ENCODE measurements at regions of chr2 and their contacts with region 1.

Region 1: DNA sequence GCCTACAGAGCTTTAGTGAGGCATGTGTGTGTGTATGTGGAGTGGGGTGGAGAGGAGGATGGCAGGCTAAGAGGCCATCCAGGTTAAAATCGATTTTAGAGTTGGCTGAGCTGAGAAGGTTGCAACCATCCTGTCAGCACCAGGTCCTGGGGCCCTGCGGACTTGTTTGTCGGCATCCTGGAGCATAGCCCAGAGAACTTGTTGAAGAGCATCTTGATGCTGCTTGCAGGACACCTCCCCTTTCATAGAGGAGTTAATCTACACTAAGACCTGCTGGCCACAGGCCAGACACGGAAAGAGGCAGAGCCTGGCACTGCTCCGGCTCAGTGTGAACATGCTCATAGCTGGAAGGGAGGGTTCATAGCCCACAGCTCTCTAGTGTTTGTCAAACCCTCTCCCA is 72.1 kb upstream of the RGPD5 start:
- DNase-seq: peak; percentile 59
- H3K4me3 ChIP-seq: no peak overlapping the region
- H3K27ac ChIP-seq: peak overlapping the region; percentile 76 to 77
- H3K4me1 ChIP-seq: peaks cover 12% of the 10 kb centered on the region
- H3K27me3 ChIP-seq: no peaks in the 10 kb centered on the region
- CTCF ChIP-seq: no peak
- POLR2A ChIP-seq: no peak

Region 2: DNA sequence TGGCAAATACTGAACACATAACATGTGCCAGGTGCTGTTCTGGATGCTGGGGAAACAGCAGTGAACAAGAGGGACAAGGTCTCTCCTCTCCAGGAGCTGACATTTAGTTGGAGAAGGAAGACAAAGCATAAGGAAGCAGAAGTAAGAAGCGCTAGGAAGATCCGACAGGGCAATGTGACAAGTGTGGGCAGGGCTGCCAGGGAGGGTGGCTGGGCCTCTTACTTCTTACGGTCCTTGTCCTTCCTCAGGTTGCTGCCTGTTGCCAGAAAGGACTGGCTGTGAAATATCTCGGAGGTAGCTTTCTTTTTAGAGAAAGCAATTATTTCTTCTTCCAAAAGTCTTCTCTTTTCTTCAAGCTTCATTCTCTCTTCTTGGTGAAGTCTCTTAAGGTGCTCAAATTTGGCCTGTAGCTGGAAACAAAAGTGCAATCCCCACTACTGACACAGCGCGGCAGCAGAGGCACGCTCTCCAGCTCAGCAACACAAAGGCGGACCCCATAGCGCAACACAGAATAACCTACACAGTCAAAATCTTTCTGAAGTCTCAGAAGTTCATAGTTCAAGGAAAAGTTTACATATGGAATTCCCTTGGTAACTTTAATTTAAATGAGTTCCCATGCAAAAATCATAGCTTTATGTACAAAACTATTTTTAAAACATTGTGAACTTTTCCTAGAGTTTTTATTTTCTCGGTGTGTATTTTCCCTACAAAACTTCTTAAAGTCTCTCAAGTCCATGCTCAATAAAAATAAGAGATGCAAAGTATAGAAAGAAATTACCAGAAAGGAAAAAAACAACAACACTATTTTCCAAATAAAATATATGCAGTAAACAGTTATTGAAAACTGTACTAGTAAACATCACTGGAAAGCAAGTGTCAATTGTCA is 176.0 kb before region 1 on chr2:
- intact Hi-C with region 1: loop called (anchors 5 kb)
- DNase-seq: peak; percentile 52
- H3K4me3 ChIP-seq: no peak overlapping the region
- H3K27ac ChIP-seq: no peak overlapping the region
- H3K4me1 ChIP-seq: no peaks in the 10 kb centered on the region
- H3K27me3 ChIP-seq: no peaks in the 10 kb centered on the region
- CTCF ChIP-seq: peak; percentile 72 to 92 (median 84)
- POLR2A ChIP-seq: no peak

Region 3: DNA sequence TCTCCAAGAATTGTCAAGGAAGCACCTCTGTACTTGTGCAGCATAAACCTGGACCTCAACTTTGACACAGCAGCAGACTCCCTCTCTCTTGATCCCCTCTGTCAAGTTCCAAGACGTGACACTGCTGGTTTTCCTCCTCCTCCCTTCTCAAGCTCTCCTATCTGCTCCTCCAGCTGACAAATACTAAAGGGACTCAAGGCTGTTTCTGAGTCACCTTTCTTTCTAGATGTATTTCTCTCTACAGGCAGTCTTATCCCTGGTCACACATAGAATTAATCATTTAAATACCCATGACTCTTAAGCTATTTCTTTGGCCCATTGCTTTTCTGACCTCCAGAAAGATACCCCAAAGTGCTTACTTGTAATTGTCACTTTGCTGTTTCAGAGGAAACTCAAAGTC is 161.8 kb before region 1 on chr2:
- intact Hi-C with region 1: no loop called
- DNase-seq: no peak
- H3K4me3 ChIP-seq: no peak overlapping the region
- H3K27ac ChIP-seq: no peak overlapping the region
- H3K4me1 ChIP-seq: no peaks in the 10 kb centered on the region
- H3K27me3 ChIP-seq: no peaks in the 10 kb centered on the region
- CTCF ChIP-seq: no peak
- POLR2A ChIP-seq: no peak

Region 4: DNA sequence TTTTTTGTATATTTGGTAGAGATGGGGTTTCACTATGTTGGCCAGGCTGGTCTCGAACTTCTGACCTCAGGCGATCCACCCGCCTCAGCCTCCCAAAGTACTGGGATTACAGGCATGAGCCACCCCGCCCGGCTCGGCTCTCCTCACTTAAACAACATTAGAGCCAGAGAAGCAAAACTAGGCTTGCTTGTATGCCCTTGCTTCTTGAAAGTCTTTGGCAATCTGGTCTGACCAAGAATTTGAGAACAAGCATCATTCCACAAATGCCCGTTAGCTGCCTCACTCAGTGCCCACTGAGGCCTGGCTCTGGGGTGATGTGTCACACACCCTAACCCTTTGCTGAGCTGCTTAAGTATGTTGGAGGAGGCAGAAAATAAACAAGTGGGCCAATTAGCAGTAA is 74.4 kb before region 1 on chr2:
- intact Hi-C with region 1: no loop called
- DNase-seq: no peak
- H3K4me3 ChIP-seq: no peak overlapping the region
- H3K27ac ChIP-seq: no peak overlapping the region
- H3K4me1 ChIP-seq: peaks cover 9% of the 10 kb centered on the region
- H3K27me3 ChIP-seq: no peaks in the 10 kb centered on the region
- CTCF ChIP-seq: no peak
- POLR2A ChIP-seq: no peak

Measured in prostate gland (tissue), 2 donors.